ENCODE measurements at regions of chr2 and their contacts with region 1.

Region 1: DNA sequence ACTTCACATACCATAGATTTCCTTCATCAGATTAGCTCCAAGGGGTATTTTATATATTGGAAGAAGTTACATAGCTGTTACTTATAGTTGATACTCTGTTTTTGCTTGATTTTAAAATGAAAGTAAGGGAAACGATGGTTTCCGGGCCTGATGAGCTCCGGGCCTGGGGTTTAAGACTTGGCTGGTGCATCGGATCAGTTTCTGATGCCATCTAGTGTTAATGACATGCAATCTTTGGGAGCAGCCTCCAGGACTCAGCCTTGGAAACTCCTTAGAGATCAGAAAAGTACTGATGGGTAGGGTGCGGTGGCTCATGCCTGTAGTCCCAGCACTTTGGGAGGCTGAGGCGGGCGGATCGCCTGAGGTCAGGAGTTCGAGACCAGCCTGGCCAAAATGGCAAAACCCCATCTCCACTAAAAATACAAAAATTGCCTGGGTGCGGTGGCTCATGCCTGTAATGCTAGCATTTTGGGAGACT is 47.1 kb upstream of the CNOT11 start:
- DNase-seq: no peak
- H3K4me3 ChIP-seq: peak overlapping the region; percentile 29 to 49 (median 30)
- H3K27ac ChIP-seq: no peak overlapping the region
- H3K4me1 ChIP-seq: peaks cover 0 to 12% (median 5%) of the 10 kb centered on the region in 4 donors
- H3K27me3 ChIP-seq: no peaks in the 10 kb centered on the region
- CTCF ChIP-seq: peak; percentile 51 to 67 (median 62)
- EP300 ChIP-seq: no peak
- POLR2A ChIP-seq: no peak

Region 2: GRCh38 chr2:101012706-101013181 is 192.8 kb before region 1 on chr2:
- intact Hi-C with region 1: loop called (anchors 5 kb)
- DNase-seq: no peak
- H3K4me3 ChIP-seq: no peak overlapping the region
- H3K27ac ChIP-seq: no peak overlapping the region
- H3K4me1 ChIP-seq: peaks cover 0 to 8% (median 0%) of the 10 kb centered on the region in 4 donors
- H3K27me3 ChIP-seq: no peaks in the 10 kb centered on the region
- CTCF ChIP-seq: peak; percentile 85 to 88 (median 86)
- EP300 ChIP-seq: no peak
- POLR2A ChIP-seq: no peak

Region 3: DNA sequence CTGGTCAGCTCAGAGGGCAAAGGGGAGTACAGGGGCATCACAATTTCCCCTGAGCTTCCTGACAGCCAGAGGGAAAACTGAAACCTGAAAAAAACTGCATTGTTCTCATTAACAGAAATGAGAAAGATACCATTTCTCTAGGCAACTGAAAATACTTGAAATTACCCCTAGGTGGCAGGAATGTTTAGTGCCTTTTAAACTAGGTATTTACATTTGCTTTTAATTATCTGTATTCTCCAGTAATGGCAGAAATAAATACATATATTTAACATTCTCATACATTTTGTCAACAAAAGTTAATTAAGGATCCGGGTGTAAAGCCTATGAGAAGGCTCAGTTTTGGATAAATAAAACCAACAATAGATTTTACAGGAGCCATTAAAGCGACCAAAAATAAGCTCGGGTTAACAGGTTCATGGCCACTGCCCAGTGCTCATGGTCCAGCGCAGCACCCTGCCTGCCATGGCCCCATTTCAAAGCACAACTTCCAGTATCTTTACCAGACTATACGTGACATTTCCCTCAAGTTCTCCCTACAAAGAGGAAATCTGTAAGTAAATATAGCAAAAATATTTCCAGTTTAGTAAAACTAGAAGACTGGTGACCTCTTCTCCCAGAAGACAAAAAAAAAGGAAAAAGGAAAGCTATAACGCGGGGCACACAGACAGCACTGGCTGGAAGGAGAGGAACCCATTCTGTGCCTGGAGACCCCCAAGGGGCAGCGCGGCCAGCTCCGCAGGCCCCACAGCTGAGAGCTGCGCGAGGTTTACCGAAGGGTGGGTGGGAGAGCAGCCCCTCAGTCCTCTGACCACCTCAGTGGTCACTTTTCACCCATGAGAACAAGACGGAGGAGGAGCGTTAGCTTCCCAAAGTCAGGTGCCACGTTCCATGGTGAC is 168.8 kb before region 1 on chr2:
- intact Hi-C with region 1: loop called (anchors 5 kb)
- DNase-seq: no peak
- H3K4me3 ChIP-seq: no peak overlapping the region
- H3K27ac ChIP-seq: no peak overlapping the region
- H3K4me1 ChIP-seq: no peaks in the 10 kb centered on the region
- H3K27me3 ChIP-seq: no peaks in the 10 kb centered on the region
- CTCF ChIP-seq: peak; percentile 50 to 57 (median 51)
- EP300 ChIP-seq: no peak
- POLR2A ChIP-seq: no peak

Region 4: DNA sequence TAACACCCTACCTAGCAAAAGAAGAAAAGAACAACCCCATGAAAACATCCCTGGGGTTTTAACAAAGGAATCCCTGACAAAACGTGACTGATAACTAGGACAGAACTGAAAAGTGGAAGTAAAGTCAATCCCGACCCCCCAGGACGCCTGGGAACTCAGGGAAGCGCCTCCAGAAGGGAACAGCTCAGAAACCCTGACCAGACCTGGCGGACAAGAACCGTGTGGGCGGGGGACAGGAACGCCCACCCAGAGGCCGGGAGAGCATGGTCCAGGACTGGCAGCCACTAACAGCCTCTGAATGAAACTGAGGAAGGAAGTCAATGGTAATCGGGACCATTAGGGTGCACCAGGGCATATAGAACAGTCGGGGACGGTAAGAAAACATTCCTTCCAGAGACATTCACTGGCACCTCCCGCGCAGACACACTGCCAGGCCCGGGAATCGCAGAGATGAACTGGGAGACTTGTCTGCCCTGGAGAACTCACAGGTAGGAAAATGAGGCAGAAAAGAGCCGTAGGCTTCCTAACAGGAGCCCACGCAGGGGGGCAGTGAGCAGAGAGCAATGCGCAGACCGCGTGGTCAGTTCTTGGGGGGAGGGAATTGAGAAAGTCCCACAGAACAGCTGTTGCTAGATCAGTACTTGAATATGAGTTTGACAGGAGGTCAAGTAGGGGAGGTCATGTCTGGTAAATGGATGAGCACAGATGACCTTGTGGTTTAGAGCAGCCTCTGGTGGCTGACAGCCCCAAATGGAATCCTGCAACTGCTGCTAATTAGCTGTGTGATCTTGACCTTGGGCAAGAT is 53.1 kb before region 1 on chr2:
- intact Hi-C with region 1: no loop called
- DNase-seq: no peak
- H3K4me3 ChIP-seq: peak overlapping the region; percentile 80 to 86 (median 80)
- H3K27ac ChIP-seq: peak overlapping the region; percentile 82 to 86 (median 84)
- H3K4me1 ChIP-seq: peaks cover 34 to 46% (median 41%) of the 10 kb centered on the region in 4 donors
- H3K27me3 ChIP-seq: no peaks in the 10 kb centered on the region
- CTCF ChIP-seq: peak; percentile 73 to 79 (median 75)
- EP300 ChIP-seq: no peak
- POLR2A ChIP-seq: no peak

Measured in esophagus muscularis mucosa (tissue), 4 donors.